Activated CD8-positive, alpha-beta T cell treated with anti-CD3 and anti-CD28 coated beads, Interleukin-2, amount 10 ng/mL, durations not matched to agents 7 days and 5 days (primary cell): ENCODE measurements at regions of chr1 and their contacts with region 1.

Region 1: GRCh38 chr1:8878448-8879347 is at the start of gene ENO1:
- DNase-seq: peak; percentile 99
- ATAC-seq: peak; percentile 76
- H3K4me3 Mint-ChIP-seq: peak within 1 kb of the TSS; percentile 97
- H3K27ac Mint-ChIP-seq: peak within 1 kb of the TSS; percentile 96
- H3K4me1 Mint-ChIP-seq: peaks cover 37% of the 10 kb centered on the region
- H3K27me3 Mint-ChIP-seq: no peaks in the 10 kb centered on the region
- total RNA-seq, gene ENO1: 3,150 to 3,216 TPM

Region 2: DNA sequence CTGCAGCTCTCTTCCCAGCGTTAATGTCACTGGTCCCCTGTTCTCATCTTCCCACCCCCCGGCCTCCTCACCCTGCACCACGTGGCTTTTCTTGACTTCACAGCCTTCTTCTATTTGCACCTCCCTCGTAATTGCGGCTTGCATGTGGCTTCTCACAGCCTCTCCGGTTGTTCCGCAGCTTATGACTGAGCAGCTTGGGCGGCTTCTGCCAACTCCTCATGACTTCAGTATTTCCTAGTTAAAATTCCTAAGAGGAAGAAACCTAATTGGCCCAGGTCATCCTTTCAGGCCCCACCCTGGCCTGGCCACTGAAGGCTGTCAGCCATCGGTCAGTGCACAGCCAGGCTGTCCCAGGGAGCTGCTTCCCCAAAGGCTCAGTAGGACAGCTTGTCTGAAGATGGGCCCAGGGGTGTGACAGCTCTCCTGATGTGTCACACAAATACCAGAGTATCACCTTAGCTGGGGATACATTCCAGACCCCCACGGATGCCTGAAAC is 52.7 kb before region 1 on chr1:
- CTCF ChIA-PET with region 1: no interaction called
- POLR2A ChIA-PET with region 1: no interaction called
- DNase-seq: no peak
- ATAC-seq: no peak
- H3K4me3 Mint-ChIP-seq: no peak overlapping the region
- H3K27ac Mint-ChIP-seq: no peak overlapping the region
- H3K4me1 Mint-ChIP-seq: peaks cover 13% of the 10 kb centered on the region
- H3K27me3 Mint-ChIP-seq: peaks cover 13% of the 10 kb centered on the region

Region 3: DNA sequence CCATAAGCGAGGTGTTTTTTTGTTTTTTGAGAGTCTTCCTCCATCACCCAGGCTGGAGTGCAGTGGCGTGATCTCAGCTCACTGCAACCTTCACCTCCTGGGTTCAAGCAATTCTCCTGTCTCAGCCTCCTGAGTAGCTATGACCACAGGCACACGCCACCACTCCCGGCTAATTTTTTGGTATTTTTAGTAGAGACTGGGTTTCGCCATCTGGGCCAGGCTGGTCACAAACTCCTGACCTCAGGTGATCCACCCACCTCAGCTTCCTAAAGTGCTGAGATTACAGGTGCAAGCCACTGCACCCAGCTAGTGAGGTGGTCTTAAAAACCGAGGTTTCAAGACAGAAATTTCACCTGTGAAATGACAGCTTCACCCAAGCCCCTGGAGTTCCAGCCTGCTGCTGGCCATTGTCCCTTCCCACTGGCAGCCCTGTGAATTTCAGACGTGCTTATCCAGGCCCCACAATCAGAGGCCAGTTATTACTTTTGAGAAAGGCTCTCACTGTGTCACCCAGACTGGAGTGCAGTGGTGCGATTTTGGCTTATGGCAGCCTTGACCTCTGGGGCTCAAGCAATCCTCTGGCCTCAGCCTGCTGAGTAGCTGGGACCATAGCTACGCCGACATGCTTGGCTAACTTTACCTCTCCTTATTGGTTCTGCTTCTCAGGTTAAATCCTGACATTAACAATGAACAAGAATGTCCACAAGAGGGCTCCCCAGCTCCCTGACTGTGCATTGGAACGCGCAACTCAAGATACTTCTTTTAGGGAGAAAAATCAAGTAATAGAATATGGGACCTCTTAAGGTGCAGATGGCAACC is 19.6 kb before region 1 on chr1:
- CTCF ChIA-PET with region 1: interaction called, 17 read pairs
- POLR2A ChIA-PET with region 1: interaction called, 30 read pairs
- DNase-seq: peak; percentile 74
- ATAC-seq: peak; percentile 52
- H3K4me3 Mint-ChIP-seq: peak overlapping the region; percentile 42
- H3K27ac Mint-ChIP-seq: peak overlapping the region; percentile 77
- H3K4me1 Mint-ChIP-seq: peaks cover 64% of the 10 kb centered on the region
- H3K27me3 Mint-ChIP-seq: no peaks in the 10 kb centered on the region

Region 4: DNA sequence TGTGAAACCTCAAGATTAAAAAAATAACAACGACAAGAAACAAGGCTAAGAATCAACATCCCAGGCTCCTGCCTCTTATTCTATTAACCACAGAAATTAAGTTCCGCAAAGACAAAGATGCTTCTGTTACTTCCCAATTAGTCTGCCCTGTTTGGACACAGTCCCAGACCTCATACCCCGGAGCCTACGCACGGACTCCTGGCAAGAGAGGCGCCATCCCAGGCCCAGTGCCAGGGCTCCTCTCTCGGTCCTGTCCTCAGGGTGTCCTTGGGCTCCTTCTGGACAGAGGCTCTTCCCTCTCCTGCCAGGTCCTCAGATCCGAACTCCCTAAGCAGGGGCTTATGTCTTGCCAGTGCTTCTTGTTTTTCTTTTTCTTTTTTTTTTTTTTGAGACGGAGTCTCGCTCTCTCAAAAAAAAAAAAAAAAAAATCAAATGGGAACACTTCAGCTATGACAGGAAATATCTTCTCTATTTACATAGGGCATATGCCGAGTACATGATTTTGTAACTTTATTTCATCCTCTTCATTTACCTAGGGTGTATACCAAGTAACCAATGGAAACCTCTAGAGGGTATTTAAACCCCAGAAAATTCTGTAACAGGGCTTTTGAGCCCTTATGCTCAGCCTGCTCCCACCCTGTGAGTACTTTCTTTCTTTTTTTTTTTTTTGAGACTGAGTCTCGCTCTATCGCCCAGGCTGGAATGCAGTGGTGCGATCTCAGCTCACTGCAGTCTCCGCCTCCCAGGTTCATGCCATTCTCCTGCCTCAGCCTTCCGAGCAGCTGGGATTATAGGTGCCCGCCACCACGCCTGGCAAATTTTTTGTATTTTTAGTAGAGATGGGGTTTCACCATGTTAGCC is 11.5 kb after region 1 on chr1:
- CTCF ChIA-PET with region 1: interaction called, 5 read pairs
- POLR2A ChIA-PET with region 1: interaction called, 12 read pairs
- DNase-seq: no peak
- ATAC-seq: no peak
- H3K4me3 Mint-ChIP-seq: no peak overlapping the region
- H3K27ac Mint-ChIP-seq: no peak overlapping the region
- H3K4me1 Mint-ChIP-seq: peaks cover 6% of the 10 kb centered on the region
- H3K27me3 Mint-ChIP-seq: no peaks in the 10 kb centered on the region

Region 5: DNA sequence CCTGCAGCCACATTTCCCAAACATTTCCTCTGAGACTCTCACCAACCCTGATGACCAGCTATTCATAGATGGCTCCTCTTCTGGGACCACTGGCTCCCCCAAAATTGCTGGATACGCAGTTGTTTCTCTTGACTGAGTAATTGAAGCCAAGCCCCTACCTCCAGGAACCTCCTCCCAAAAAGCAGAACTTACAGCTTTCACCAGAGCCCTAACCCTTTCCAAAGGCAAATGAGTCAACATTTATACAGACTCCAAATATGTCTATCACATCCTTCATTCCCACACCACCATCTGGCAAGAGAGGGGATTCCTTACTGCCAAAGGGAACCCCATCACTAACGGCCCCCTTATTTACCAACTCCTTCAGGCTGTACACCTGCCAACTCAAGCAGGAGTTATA is 46.7 kb after region 1 on chr1:
- CTCF ChIA-PET with region 1: interaction called, 4 read pairs
- POLR2A ChIA-PET with region 1: interaction called, 103 read pairs
- DNase-seq: no peak
- ATAC-seq: no peak
- H3K4me3 Mint-ChIP-seq: no peak overlapping the region
- H3K27ac Mint-ChIP-seq: no peak overlapping the region
- H3K4me1 Mint-ChIP-seq: peaks cover 39% of the 10 kb centered on the region
- H3K27me3 Mint-ChIP-seq: no peaks in the 10 kb centered on the region

Region 6: GRCh38 chr1:8962812-8963530 is 84.3 kb after region 1 on chr1:
- CTCF ChIA-PET with region 1: interaction called, 5 read pairs
- POLR2A ChIA-PET with region 1: interaction called, 18 read pairs
- DNase-seq: peak; percentile 80
- ATAC-seq: peak; percentile 42
- H3K4me3 Mint-ChIP-seq: peak overlapping the region; percentile 99
- H3K27ac Mint-ChIP-seq: peak overlapping the region; percentile 85
- H3K4me1 Mint-ChIP-seq: peaks cover 83% of the 10 kb centered on the region
- H3K27me3 Mint-ChIP-seq: no peaks in the 10 kb centered on the region

Region 7: DNA sequence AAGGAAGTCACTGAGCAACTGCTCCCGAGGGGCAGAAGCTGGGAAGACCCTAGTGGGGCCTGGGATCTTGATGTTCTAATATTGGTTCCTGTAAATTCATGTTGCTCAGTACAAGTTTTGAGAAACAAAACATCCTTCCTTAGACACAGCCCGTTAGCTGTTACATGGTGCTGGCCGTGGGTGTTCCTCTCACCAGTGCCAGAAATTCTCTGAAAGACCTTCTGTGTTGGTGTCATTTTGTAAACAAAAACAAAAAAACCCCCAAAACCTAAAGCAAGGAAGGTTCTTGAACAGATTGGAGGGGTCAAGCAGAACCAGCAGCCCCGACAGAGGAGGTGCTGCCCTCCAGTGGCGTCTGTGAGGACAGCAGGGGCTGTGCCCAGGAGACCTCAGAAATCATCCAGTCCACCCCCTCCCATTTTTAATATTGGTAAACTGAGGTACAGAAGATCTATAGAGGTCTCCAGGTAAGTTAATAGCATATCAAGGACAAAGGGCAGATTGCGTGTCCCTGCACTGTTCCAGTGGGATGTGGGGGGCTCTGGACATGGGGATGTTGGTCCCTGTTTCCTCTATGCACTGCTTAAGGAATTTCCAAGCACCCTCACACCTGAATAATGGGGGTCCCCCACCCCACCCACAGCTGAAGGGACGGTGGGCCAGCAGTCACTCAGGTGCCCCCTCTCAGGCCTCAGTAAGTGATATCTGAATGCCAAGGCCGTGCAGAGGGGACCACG is 109.4 kb after region 1 on chr1:
- CTCF ChIA-PET with region 1: interaction called, 11 read pairs
- POLR2A ChIA-PET with region 1: interaction called, 25 read pairs
- DNase-seq: peak; percentile 76
- ATAC-seq: peak; percentile 62
- H3K4me3 Mint-ChIP-seq: peak overlapping the region; percentile 48
- H3K27ac Mint-ChIP-seq: peak overlapping the region; percentile 94
- H3K4me1 Mint-ChIP-seq: peaks cover 62% of the 10 kb centered on the region
- H3K27me3 Mint-ChIP-seq: no peaks in the 10 kb centered on the region

Region 8: DNA sequence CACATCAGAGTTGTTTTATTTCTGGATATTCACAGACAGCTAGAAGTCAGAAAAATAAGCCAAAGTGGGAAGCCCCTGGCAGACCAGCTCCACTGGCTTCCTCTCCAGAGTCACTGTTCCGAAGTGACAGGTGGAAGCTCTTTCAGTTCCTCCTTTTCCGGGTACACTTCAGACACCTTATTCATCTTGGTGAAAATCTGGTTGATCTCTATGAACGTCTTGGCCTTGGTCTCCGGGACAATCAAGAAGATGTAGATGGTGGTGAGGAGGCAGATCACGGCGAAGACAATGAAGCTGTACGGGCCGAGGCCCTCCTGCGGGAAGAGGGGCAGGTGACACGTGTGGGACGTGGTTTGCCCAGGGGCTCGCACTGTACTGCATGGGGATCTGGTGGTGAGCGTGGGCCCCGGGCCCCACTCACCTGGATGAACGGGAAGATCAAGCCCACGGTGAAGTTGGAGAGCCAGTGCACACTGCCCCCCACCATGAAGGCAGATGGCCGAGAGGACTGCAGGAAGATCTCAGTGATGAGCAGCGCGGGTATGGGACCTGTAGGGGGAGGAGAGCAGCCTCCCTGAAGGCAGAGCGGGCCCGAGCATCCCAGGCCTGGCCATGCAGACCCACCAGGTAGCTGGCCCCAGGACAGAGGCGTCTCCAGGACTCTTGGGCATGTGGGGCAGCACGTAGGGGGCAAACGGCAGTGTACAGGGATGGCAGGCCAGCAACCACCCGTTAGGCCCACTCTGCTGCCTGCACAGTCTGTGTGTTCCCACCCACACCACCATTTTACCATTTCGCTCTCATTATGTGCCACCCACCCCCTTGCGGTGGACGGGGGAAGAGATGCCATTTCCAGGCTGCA is 159.0 kb after region 1 on chr1:
- CTCF ChIA-PET with region 1: no interaction called
- POLR2A ChIA-PET with region 1: no interaction called
- DNase-seq: no peak
- ATAC-seq: no peak
- H3K4me3 Mint-ChIP-seq: no peak overlapping the region
- H3K27ac Mint-ChIP-seq: no peak overlapping the region
- H3K4me1 Mint-ChIP-seq: no peaks in the 10 kb centered on the region
- H3K27me3 Mint-ChIP-seq: no peaks in the 10 kb centered on the region